K562 (cell line): ENCODE measurements at regions of chr2 and their contacts with region 1.

Region 1: GRCh38 chr2:102841107-102841840 is 79.4 kb downstream of the TMEM182 start:
- DNase-seq: peak; percentile 35 to 63 (median 47)
- ATAC-seq: peak; percentile 98
- H3K4me3 ChIP-seq: no peak overlapping the region
- H3K27ac ChIP-seq: no peak overlapping the region
- H3K4me1 ChIP-seq: no peaks in the 10 kb centered on the region; a peak in 1 of 5 replicates
- H3K27me3 ChIP-seq: peaks cover 0 to 11% of the 10 kb centered on the region in 2 experiments; a peak in 2 of 5 replicates
- CTCF ChIP-seq: peak; percentile 58 to 73 (median 69)
- EP300 ChIP-seq: no peak
- POLR2A ChIP-seq: no peak
- RAD21 ChIP-seq: peak; percentile 55 to 70

Region 2: DNA sequence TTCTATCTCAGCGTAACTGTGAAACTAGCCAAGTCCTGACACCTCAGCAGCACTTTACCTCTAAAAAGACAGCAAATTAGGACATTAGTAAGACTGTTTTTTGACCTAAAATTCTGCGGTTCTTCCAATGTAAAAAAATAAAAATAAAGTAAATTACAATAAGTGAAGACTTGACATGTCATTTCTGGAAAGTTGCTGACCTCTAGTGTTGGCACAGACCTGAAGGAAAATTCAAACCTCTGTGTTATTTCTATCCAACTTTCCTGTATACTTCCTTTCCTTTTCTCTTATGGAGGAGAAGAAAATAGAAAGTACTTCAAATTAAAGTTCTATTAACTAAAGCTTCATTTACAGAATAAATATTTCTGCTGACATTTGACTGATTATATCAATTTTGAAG is 31.1 kb after region 1 on chr2:
- CTCF ChIA-PET with region 1: no interaction called
- POLR2A ChIA-PET with region 1: no interaction called
- in situ Hi-C with region 1: no loop called
- intact Hi-C with region 1: loop called (anchors 2 kb)
- DNase-seq: no peak
- ATAC-seq: no peak
- H3K4me3 ChIP-seq: no peak overlapping the region
- H3K27ac ChIP-seq: no peak overlapping the region
- H3K4me1 ChIP-seq: no peaks in the 10 kb centered on the region
- H3K27me3 ChIP-seq: no peaks in the 10 kb centered on the region
- CTCF ChIP-seq: peak in 1 of 3 experiments; percentile 41; a peak in 2 of 6 replicates
- EP300 ChIP-seq: no peak
- POLR2A ChIP-seq: no peak
- RAD21 ChIP-seq: peak; percentile 31 to 54; a peak in 2 of 4 replicates

Region 3: DNA sequence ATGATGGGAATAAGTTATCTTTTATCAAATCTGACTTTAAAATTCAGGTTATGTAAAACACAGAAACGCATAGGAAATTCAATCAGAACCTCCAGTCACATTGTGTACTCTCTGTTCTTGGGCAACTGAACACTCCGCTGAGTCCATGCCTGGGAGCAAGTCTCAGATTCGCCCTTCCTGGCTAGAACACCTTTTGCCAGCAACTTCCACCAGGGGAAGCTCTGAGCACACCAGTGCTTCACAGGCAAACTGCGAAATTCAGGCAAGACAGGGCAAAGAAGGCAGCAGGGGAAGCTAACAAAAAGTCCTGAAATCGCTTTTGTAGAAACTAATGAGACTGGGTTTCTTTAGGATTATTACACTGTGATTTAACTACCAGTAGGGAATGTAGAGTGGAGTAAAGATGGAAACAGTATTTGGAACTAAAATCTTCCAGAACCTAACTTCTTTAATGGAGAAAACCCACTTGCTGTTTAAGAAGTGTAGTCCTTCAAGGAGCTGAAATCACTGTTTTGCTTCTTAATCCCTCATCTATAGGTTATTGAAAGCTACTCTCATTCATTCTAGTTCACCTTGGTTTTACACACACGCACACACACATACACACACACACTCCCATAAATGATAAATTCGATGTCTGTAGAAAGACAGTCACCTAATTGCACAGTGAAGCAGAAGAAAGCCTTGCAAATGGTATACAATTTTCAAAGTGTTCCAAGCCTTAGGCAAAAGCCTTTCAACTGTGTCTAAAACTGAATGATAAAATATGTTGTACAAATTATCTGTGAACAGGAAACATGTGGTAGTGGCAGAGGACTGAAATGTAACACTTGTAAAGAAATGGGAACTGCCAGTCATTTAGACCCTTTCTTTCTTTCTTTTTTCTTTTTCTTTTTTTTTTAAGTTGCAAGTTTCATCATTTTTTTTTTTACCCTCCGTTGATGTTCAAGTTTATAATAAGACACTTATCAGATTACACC is 135.0 kb after region 1 on chr2:
- CTCF ChIA-PET with region 1: no interaction called
- POLR2A ChIA-PET with region 1: no interaction called
- in situ Hi-C with region 1: no loop called
- intact Hi-C with region 1: loop called (anchors 10 kb)
- DNase-seq: peak; percentile 9 to 34 (median 13)
- ATAC-seq: peak; percentile 88
- H3K4me3 ChIP-seq: no peak overlapping the region
- H3K27ac ChIP-seq: no peak overlapping the region
- H3K4me1 ChIP-seq: no peaks in the 10 kb centered on the region
- H3K27me3 ChIP-seq: no peaks in the 10 kb centered on the region
- CTCF ChIP-seq: peak; percentile 45 to 64 (median 57)
- EP300 ChIP-seq: no peak
- POLR2A ChIP-seq: no peak
- RAD21 ChIP-seq: peak; percentile 57 to 67

Region 4: DNA sequence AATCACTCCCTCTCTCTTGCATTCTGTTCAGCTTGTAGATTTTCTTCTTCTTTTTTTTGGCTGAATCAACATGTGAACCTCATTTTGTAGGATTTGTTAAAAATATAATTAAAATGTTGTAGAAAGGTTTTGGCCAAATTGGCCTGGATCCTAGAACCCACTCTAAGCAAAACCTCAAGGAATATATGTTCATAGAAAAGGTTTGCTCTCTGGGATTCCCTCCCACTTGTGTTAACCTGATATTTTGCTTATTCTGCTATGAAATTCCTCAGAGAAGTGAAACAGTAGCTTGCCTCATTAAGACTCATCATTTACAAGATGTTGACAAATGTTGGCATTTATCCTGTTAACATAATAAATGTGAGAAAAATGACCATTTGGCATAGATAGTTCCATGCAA is 377.2 kb after region 1 on chr2:
- CTCF ChIA-PET with region 1: no interaction called
- POLR2A ChIA-PET with region 1: no interaction called
- in situ Hi-C with region 1: no loop called
- intact Hi-C with region 1: no loop called
- DNase-seq: no peak
- ATAC-seq: no peak
- H3K4me3 ChIP-seq: no peak overlapping the region
- H3K27ac ChIP-seq: no peak overlapping the region
- H3K4me1 ChIP-seq: no peaks in the 10 kb centered on the region
- H3K27me3 ChIP-seq: no peaks in the 10 kb centered on the region
- CTCF ChIP-seq: no peak
- EP300 ChIP-seq: no peak
- POLR2A ChIP-seq: no peak
- RAD21 ChIP-seq: no peak